Head of caudate nucleus (tissue), 42 donors: ENCODE measurements at regions of chr7 and their contacts with region 1.

Region 1: GRCh38 chr7:92720604-92721350 is 115.6 kb downstream of the CDK6 start:
- DNase-seq: no peak

Region 2: DNA sequence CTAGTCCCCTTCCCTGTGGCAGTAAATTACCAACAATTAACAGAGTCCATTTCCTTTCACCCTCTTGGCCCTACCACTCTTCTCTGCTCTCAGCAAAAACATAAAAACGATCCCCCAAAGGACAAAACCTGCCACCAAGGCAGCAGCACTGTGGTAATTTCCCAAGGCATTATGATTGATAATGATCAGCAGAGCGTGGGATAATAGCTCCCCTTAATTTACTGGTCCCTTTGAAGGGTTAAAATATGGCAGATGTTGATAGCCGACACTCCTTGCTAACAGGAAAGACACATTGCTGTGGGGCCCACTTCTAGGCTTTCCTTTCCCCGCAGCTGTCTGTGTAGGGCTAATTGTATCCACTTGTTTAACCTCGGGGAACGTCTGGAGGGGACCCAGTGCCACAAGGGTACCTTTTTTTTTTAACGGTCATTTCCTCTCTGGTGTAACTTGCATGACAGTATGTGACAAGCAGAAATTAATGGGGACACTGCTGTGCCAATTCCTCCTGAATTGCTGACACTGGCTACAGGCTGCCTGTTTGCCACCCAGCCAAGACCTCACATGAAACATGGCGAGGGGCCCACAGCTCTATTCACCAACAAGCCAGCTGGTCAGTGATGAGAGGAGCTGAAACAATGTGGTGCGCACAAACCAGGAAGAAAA is 34.3 kb after region 1 on chr7:
- intact Hi-C with region 1: loop called (anchors 5 kb)
- DNase-seq: peak; percentile 36 to 90 (median 71)